Lower lobe of right lung (tissue), 2 donors: ENCODE measurements at regions of chr3 and their contacts with region 1.

Region 1: GRCh38 chr3:152205097-152205593 is 63.6 kb upstream of the MBNL1 start:
- DNase-seq: no peak
- ATAC-seq: peak; percentile 74 to 84
- H3K4me3 ChIP-seq: peak overlapping the region; percentile 41
- H3K27ac ChIP-seq: peak overlapping the region; percentile 74
- H3K4me1 ChIP-seq: peaks cover 34% of the 10 kb centered on the region
- H3K27me3 ChIP-seq: no peaks in the 10 kb centered on the region
- CTCF ChIP-seq: no peak

Region 2: GRCh38 chr3:152268555-152269425 is 63.6 kb after region 1 on chr3 and contains the start of gene MBNL1:
- intact Hi-C with region 1: loop called (anchors 10 kb)
- DNase-seq: peak; percentile 89
- ATAC-seq: peak; percentile 84 to 89
- H3K4me3 ChIP-seq: peak within 1 kb of the TSS; percentile 83
- H3K27ac ChIP-seq: peak within 1 kb of the TSS; percentile 99
- H3K4me1 ChIP-seq: peaks cover 47% of the 10 kb centered on the region
- H3K27me3 ChIP-seq: no peaks in the 10 kb centered on the region
- CTCF ChIP-seq: no peak
- total RNA-seq, gene MBNL1: 235 TPM

Region 3: GRCh38 chr3:152491922-152492321 is 286.8 kb after region 1 on chr3:
- intact Hi-C with region 1: no loop called
- DNase-seq: no peak
- ATAC-seq: no peak
- H3K4me3 ChIP-seq: no peak overlapping the region
- H3K27ac ChIP-seq: no peak overlapping the region
- H3K4me1 ChIP-seq: no peaks in the 10 kb centered on the region
- H3K27me3 ChIP-seq: no peaks in the 10 kb centered on the region
- CTCF ChIP-seq: no peak